BJ (cell line): ENCODE measurements at regions of chr12 and their contacts with region 1.

Region 1: DNA sequence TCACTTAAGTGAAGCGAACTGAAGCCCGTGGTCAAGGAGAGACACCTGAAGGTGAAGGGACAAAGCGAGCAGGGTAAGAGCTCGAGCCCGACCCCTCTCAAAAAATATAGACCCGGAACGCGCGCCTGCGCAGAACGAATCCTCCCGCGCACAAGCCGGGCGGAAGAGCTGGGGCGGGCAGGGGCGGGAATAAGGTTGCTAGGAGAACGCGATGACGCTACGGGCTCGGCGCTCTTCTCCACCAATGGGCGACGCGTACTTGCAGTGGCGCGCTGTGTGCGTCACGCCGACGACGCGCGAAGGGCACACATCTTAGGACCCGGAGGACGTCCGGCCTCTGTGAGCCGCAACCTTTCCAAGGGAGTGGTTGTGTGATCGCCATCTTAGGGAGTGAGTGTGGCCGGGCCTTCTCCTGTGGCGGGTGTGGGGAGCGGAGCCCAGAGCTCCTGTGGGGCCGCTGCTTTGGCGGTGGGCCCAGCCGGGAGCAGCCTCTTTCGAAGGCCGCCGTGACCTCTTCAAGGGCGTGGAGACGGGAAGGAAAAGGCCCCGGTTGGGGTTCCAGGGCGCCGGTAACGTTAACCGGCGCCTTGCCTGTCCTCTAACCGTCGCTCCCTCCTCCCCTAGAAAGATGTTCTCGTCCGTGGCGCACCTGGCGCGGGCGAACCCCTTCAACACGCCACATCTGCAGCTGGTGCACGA is at the start of gene SLC25A3:
- DNase-seq: peak; percentile 92
- H3K4me3 ChIP-seq: peak within 1 kb of the TSS; percentile 93
- H3K27me3 ChIP-seq: no peaks in the 10 kb centered on the region
- CTCF ChIP-seq: no peak
- polyA plus RNA-seq, gene SLC25A3: 909 and 920 TPM in 2 replicates

Region 2: GRCh38 chr12:98618952-98619351 is 25.5 kb after region 1 on chr12:
- CTCF ChIA-PET with region 1: interaction called, 4 read pairs
- POLR2A ChIA-PET with region 1: interaction called, 11 read pairs
- DNase-seq: no peak
- H3K4me3 ChIP-seq: no peak overlapping the region
- H3K27me3 ChIP-seq: no peaks in the 10 kb centered on the region
- CTCF ChIP-seq: no peak

Region 3: DNA sequence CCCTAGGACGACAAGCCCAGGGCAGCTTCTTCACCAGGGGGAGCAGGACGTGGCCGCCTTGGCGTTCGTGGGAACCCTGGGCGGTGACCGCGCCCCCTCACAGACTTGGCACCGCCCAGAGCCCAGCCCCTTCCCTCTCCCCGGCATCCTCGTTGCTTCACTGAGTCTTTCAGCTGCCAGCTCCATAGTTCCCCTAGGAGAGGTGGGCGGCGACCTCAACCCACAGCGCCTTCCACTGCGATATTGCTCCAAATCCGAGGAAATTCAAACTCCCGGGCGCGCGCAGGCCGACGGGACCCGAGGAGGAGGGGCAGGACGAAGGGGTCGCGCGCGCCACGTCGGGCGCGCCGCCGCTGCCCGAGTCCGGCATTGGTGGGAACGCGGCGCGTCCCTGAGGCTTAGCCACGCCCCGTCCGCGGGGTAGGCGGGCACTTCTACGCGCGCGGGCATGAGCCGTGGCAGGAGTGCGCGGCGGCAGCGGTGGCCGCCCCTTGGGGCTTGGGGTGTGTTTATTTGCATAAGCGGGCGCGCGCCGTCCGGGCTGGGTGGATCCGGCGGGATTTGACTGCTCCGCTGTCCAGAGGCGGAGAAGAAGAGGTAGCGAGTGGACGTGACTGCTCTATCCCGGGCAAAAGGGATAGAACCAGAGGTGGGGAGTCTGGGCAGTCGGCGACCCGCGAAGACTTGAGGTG is 51.4 kb after region 1 on chr12 and contains the starts of genes APAF1 and IKBIP:
- CTCF ChIA-PET with region 1: interaction called, 4 read pairs
- POLR2A ChIA-PET with region 1: interaction called, 10 read pairs
- DNase-seq: peak; percentile 76
- H3K4me3 ChIP-seq: peak within 1 kb of the TSS; percentile 99
- H3K27me3 ChIP-seq: no peaks in the 10 kb centered on the region
- CTCF ChIP-seq: peak; percentile 31
- polyA plus RNA-seq, gene APAF1: 6.0 and 8.8 TPM in 2 replicates
- polyA plus RNA-seq, gene IKBIP: 30.2 and 53.2 TPM in 2 replicates